Right ventricle myocardium inferior (tissue), 1 donor: ENCODE measurements at regions of chr11 and their contacts with region 1.

Region 1: GRCh38 chr11:47616726-47617416 is 22.7 kb upstream of the C1QTNF4 start:
- DNase-seq: no peak
- ATAC-seq: peak; percentile 80

Region 2: GRCh38 chr11:47499614-47500013 is 117.3 kb before region 1 on chr11:
- intact Hi-C with region 1: loop called (anchors 10 kb)
- DNase-seq: no peak
- ATAC-seq: peak; percentile 68

Region 3: DNA sequence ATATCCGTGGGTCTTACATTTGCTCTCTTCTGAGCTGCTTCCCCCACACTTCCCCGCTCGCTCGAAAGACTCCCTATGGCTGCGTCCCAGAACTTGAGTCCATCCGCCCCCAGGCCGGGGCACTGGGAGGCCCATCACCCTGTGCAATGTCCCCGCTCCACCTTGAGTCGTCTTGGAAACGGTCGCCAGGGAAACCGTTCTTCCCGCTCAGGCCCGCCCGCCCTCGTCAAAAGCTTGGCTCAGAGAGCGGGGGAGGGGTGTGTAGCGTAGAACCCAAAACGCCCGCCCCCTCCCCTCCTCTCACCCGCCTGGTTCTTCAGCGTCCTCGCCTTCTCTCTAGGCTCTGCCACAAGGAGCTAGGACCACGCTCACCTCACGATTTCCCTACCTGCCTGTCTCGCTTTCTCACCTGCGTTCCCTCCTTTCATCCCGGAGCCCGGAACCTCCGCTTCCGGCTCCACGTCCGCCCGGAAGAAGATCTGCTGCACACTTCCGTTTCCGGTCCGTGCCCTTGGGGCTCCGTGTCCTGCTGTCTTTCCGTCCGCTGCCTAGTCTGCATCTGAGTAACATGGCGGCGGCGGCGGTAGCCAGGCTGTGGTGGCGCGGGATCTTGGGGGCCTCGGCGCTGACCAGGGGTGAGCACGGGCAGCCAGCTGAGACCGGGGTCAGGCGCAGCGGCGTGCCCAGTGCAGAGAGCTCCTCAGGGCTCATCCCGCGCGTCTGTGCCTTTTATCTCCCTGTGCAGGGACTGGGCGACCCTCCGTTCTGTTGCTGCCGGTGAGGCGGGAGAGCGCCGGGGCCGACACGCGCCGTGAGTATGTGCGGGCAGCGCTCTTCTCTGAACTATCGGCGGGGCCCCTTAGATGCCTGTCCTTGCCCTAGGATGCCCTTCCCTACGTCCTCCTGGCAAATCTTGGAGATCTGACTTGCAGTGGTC is 38.1 kb before region 1 on chr11 and contains the starts of genes KBTBD4 and NDUFS3:
- intact Hi-C with region 1: loop called (anchors 5 kb)
- DNase-seq: peak; percentile 94
- ATAC-seq: peak; percentile 94
- total RNA-seq, gene KBTBD4: 13.1 TPM
- total RNA-seq, gene NDUFS3: 342 TPM